CD4-positive, alpha-beta memory T cell (primary cell): ENCODE measurements at regions of chr3 and their contacts with region 1.

Region 1: GRCh38 chr3:10248184-10249080 is at the start of gene TATDN2:
- DNase-seq: peak; percentile 89 to 93 (median 92)
- H3K4me3 ChIP-seq: peak within 1 kb of the TSS; percentile 23 to 99
- H3K4me3 Mint-ChIP-seq: peak within 1 kb of the TSS; percentile 97 to 99 (median 99)
- H3K27ac ChIP-seq: peak within 1 kb of the TSS; percentile 78
- H3K27ac Mint-ChIP-seq: peak within 1 kb of the TSS; percentile 95 to 98 (median 97)
- H3K4me1 ChIP-seq: peaks cover 49% of the 10 kb centered on the region
- H3K4me1 Mint-ChIP-seq: peaks cover 35 to 65% (median 54%) of the 10 kb centered on the region in 4 donors
- H3K27me3 ChIP-seq: no peaks in the 10 kb centered on the region
- H3K27me3 Mint-ChIP-seq: no peaks in the 10 kb centered on the region
- total RNA-seq, gene TATDN2: 76.1 to 79.3 TPM

Region 2: GRCh38 chr3:10142707-10143566 is 105.5 kb before region 1 on chr3:
- CTCF ChIA-PET with region 1: no interaction called
- POLR2A ChIA-PET with region 1: interaction called, 8 read pairs
- intact Hi-C with region 1: loop called (anchors 2 kb)
- DNase-seq: peak in 3 of 5 donors; percentile 14 to 46 (median 18)
- H3K4me3 ChIP-seq: peak overlapping the region; percentile 55 to 95
- H3K4me3 Mint-ChIP-seq: peak overlapping the region; percentile 90 to 98 (median 95)
- H3K27ac ChIP-seq: peak overlapping the region; percentile 94
- H3K27ac Mint-ChIP-seq: peak overlapping the region; percentile 88 to 99 (median 96)
- H3K4me1 ChIP-seq: peaks cover 45% of the 10 kb centered on the region
- H3K4me1 Mint-ChIP-seq: peaks cover 22 to 58% (median 32%) of the 10 kb centered on the region in 4 donors
- H3K27me3 ChIP-seq: no peaks in the 10 kb centered on the region
- H3K27me3 Mint-ChIP-seq: no peaks in the 10 kb centered on the region

Region 3: DNA sequence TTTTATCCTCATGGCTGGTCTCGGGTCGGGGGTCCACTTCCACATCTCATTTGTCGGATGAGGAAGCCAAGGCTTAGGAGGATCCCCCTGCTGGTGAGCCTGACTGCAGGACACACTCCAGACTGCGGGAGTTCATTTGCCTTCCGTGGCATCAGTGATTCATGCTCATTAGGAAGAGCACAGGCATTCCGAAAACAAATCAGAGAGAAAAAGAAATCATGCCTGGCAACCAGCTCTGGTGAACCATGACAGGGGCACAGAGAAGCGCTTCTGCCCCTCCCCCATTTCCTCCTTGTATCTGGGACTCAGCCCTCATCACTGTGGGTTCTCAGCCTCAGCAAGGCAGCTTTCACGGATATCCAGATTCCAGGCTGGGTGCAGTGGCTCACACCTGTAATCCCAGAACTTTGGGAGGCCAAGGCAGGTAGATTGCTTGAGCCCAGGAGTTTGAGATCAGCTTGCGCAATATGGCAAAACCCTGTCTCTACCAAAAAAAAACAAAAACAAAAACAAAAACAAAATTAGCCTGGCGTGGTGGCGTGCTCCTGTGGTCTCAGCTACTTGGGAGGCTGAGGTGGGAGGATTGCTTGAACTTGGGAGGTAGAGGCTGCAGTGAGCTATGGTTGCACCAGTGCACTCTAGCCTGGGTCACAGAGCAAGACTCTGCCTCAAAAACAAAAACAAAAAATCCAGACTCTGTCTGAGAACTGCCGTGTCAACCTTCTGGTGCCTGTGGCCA is 55.3 kb before region 1 on chr3:
- CTCF ChIA-PET with region 1: no interaction called
- POLR2A ChIA-PET with region 1: interaction called, 25 read pairs
- intact Hi-C with region 1: loop called (anchors 2 kb)
- DNase-seq: peak; percentile 54 to 77 (median 56)
- H3K4me3 ChIP-seq: peak overlapping the region in 1 of 2 donors; percentile 33
- H3K4me3 Mint-ChIP-seq: peak overlapping the region; percentile 69 to 89 (median 82)
- H3K27ac ChIP-seq: peak overlapping the region; percentile 87
- H3K27ac Mint-ChIP-seq: peak overlapping the region; percentile 98 to 100 (median 99)
- H3K4me1 ChIP-seq: peaks cover 92% of the 10 kb centered on the region
- H3K4me1 Mint-ChIP-seq: peaks cover 64 to 90% (median 77%) of the 10 kb centered on the region in 4 donors
- H3K27me3 ChIP-seq: no peaks in the 10 kb centered on the region
- H3K27me3 Mint-ChIP-seq: no peaks in the 10 kb centered on the region

Region 4: DNA sequence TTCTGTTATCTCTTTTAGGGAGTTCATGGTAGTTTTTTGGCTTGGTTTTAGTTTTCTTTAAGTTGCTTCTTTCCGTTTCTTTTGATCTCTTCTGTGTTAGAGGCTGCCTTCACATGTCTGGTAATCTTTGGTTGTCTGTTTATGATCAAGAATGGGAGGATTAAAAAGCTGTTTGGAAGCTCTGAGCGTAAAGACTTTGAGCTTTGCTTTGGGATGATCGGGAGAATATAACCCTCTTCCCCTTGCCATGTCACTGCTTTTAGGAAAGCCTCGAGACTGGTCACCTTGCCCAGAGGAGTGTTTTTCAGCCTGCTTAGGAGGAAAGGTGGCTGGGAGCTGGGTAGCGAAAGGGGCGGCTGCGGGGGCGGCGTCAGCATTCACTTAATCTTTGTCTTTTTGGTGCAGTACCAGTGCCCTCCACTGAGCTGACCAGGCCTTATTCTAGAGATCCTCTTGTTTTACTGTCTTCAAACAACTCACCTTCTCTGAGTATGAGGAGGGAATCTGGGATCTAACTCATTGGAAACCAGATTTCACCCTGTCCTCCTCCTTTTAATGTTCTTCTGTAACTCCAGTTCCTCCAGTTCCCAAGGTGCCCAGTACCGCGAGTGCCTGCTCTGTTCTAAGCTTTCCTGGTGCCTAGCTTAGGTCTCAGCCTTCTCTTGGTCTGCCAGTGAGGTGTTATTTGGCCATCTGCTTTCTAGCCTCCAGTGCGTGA is 15.4 kb after region 1 on chr3:
- CTCF ChIA-PET with region 1: interaction called, 67 read pairs
- POLR2A ChIA-PET with region 1: interaction called, 62 read pairs
- intact Hi-C with region 1: loop called (anchors 1 kb)
- DNase-seq: peak; percentile 66 to 80 (median 71)
- H3K4me3 ChIP-seq: peak overlapping the region in 1 of 2 donors; percentile 22
- H3K4me3 Mint-ChIP-seq: peak overlapping the region; percentile 72 to 91 (median 80)
- H3K27ac ChIP-seq: peak overlapping the region; percentile 64
- H3K27ac Mint-ChIP-seq: peak overlapping the region; percentile 78 to 97 (median 91)
- H3K4me1 ChIP-seq: peaks cover 83% of the 10 kb centered on the region
- H3K4me1 Mint-ChIP-seq: peaks cover 48 to 93% (median 76%) of the 10 kb centered on the region in 4 donors
- H3K27me3 ChIP-seq: no peaks in the 10 kb centered on the region
- H3K27me3 Mint-ChIP-seq: no peaks in the 10 kb centered on the region

Region 5: GRCh38 chr3:10322352-10322710 is 73.9 kb after region 1 on chr3:
- CTCF ChIA-PET with region 1: no interaction called
- POLR2A ChIA-PET with region 1: interaction called, 6 read pairs
- intact Hi-C with region 1: loop called (anchors 1 kb)
- DNase-seq: peak in 3 of 5 donors; percentile 22 to 33 (median 23)
- H3K4me3 ChIP-seq: no peak overlapping the region
- H3K4me3 Mint-ChIP-seq: peak overlapping the region in 3 of 8 donors; percentile 20 to 92 (median 46)
- H3K27ac ChIP-seq: no peak overlapping the region
- H3K27ac Mint-ChIP-seq: peak overlapping the region in 5 of 7 donors; percentile 81 to 97 (median 86)
- H3K4me1 ChIP-seq: peaks cover 28% of the 10 kb centered on the region
- H3K4me1 Mint-ChIP-seq: peaks cover 18 to 42% (median 29%) of the 10 kb centered on the region in 4 donors
- H3K27me3 ChIP-seq: peaks cover 6% of the 10 kb centered on the region
- H3K27me3 Mint-ChIP-seq: peaks cover 2 to 5% of the 10 kb centered on the region in 2 donors

Region 6: GRCh38 chr3:10581251-10581650 is 332.8 kb after region 1 on chr3:
- CTCF ChIA-PET with region 1: no interaction called
- POLR2A ChIA-PET with region 1: no interaction called
- intact Hi-C with region 1: no loop called
- DNase-seq: no peak
- H3K4me3 ChIP-seq: no peak overlapping the region
- H3K4me3 Mint-ChIP-seq: no peak overlapping the region
- H3K27ac ChIP-seq: no peak overlapping the region
- H3K27ac Mint-ChIP-seq: no peak overlapping the region
- H3K4me1 ChIP-seq: no peaks in the 10 kb centered on the region
- H3K4me1 Mint-ChIP-seq: peaks cover 0 to 1% (median 0%) of the 10 kb centered on the region in 4 donors
- H3K27me3 ChIP-seq: no peaks in the 10 kb centered on the region
- H3K27me3 Mint-ChIP-seq: peaks cover 15 to 28% of the 10 kb centered on the region in 2 donors